GM12878 (cell line): ENCODE measurements at regions of chr2 and their contacts with region 1.

Region 1: GRCh38 chr2:223797811-223798721 is 39.3 kb downstream of the AP1S3 start:
- DNase-seq: peak; percentile 56
- ATAC-seq: peak; percentile 99
- H3K4me3 ChIP-seq: no peak overlapping the region
- H3K27ac ChIP-seq: no peak overlapping the region
- H3K4me1 ChIP-seq: peaks cover 20% of the 10 kb centered on the region
- H3K27me3 ChIP-seq: no peaks in the 10 kb centered on the region
- CTCF ChIP-seq: peak in 2 of 3 experiments; percentile 18 to 55; a peak in 2 of 6 replicates
- EP300 ChIP-seq: peak in 1 of 2 experiments; percentile 52; a peak in 2 of 4 replicates
- POLR2A ChIP-seq: no peak
- RAD21 ChIP-seq: peak; percentile 68

Region 2: GRCh38 chr2:223760838-223761502 is 37.1 kb before region 1 on chr2:
- CTCF ChIA-PET with region 1: interaction called, 26 read pairs
- POLR2A ChIA-PET with region 1: no interaction called
- RAD21 ChIA-PET with region 1: interaction called, 26 read pairs
- SMC1A ChIA-PET with region 1: interaction called, 9 read pairs
- in situ Hi-C with region 1: no loop called
- intact Hi-C with region 1: no loop called
- DNase-seq: peak; percentile 53
- ATAC-seq: peak; percentile 91
- H3K4me3 ChIP-seq: no peak overlapping the region
- H3K27ac ChIP-seq: peak overlapping the region; percentile 58
- H3K4me1 ChIP-seq: peaks cover 27% of the 10 kb centered on the region
- H3K27me3 ChIP-seq: no peaks in the 10 kb centered on the region
- CTCF ChIP-seq: peak; percentile 30 to 51 (median 46)
- EP300 ChIP-seq: no peak
- POLR2A ChIP-seq: no peak
- RAD21 ChIP-seq: peak; percentile 35; the same call in 1 of the 2 replicates

Region 3: DNA sequence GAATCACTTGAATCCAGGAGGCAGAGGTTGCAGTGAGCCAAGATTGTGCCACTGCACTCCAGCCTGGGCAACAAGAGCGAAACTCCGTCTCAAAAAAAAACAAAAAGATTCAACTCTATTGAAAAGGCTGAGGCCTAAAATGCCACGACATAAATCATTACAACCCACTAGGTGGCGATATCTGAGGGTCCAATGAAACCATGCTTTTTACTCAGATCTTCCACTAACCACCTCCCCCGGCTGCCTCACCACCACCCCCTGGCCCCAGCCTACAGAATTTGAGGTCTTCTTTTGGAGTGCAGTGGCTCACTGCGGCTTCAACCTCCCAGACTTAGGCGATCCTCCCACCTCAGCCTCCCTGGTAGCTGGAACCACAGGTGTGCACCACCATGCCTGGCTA is 18.2 kb before region 1 on chr2:
- CTCF ChIA-PET with region 1: interaction called, 13 read pairs
- POLR2A ChIA-PET with region 1: interaction called, 3 read pairs
- RAD21 ChIA-PET with region 1: interaction called, 6 read pairs
- SMC1A ChIA-PET with region 1: interaction called, 3 read pairs
- in situ Hi-C with region 1: no loop called
- intact Hi-C with region 1: no loop called
- DNase-seq: no peak
- ATAC-seq: peak; percentile 91
- H3K4me3 ChIP-seq: no peak overlapping the region
- H3K27ac ChIP-seq: no peak overlapping the region
- H3K4me1 ChIP-seq: no peaks in the 10 kb centered on the region
- H3K27me3 ChIP-seq: no peaks in the 10 kb centered on the region
- CTCF ChIP-seq: peak; percentile 37 to 45 (median 42); a peak in 5 of 6 replicates
- EP300 ChIP-seq: no peak
- POLR2A ChIP-seq: no peak
- RAD21 ChIP-seq: peak; percentile 69

Region 4: GRCh38 chr2:223786943-223787342 is 11.1 kb before region 1 on chr2:
- CTCF ChIA-PET with region 1: interaction called, 9 read pairs
- POLR2A ChIA-PET with region 1: interaction called, 3 read pairs
- RAD21 ChIA-PET with region 1: interaction called, 12 read pairs
- SMC1A ChIA-PET with region 1: interaction called, 7 read pairs
- in situ Hi-C with region 1: no loop called
- intact Hi-C with region 1: no loop called
- DNase-seq: no peak
- ATAC-seq: peak; percentile 66
- H3K4me3 ChIP-seq: no peak overlapping the region
- H3K27ac ChIP-seq: peak overlapping the region; percentile 55
- H3K4me1 ChIP-seq: peaks cover 16% of the 10 kb centered on the region
- H3K27me3 ChIP-seq: no peaks in the 10 kb centered on the region
- CTCF ChIP-seq: no peak
- EP300 ChIP-seq: no peak
- POLR2A ChIP-seq: no peak
- RAD21 ChIP-seq: no peak